ENCODE measurements at regions of chr7 and their contacts with region 1.

Region 1: GRCh38 chr7:44847508-44847920 is 373 bp downstream of the H2AZ2 start:
- DNase-seq: peak in 1 of 2 experiments; percentile 33
- H3K4me3 ChIP-seq: peak overlapping the region; percentile 64 to 93 (median 85)
- H3K27ac ChIP-seq: peak overlapping the region; percentile 86
- H3K4me1 ChIP-seq: peaks cover 0 to 3% (median 0%) of the 10 kb centered on the region in 4 experiments; a peak in 2 of 7 replicates
- H3K27me3 ChIP-seq: no peaks in the 10 kb centered on the region
- CTCF ChIP-seq: peak; percentile 68 to 75 (median 70)
- EP300 ChIP-seq: no peak
- POLR2A ChIP-seq: no peak
- RAD21 ChIP-seq: peak; percentile 64 to 69

Region 2: DNA sequence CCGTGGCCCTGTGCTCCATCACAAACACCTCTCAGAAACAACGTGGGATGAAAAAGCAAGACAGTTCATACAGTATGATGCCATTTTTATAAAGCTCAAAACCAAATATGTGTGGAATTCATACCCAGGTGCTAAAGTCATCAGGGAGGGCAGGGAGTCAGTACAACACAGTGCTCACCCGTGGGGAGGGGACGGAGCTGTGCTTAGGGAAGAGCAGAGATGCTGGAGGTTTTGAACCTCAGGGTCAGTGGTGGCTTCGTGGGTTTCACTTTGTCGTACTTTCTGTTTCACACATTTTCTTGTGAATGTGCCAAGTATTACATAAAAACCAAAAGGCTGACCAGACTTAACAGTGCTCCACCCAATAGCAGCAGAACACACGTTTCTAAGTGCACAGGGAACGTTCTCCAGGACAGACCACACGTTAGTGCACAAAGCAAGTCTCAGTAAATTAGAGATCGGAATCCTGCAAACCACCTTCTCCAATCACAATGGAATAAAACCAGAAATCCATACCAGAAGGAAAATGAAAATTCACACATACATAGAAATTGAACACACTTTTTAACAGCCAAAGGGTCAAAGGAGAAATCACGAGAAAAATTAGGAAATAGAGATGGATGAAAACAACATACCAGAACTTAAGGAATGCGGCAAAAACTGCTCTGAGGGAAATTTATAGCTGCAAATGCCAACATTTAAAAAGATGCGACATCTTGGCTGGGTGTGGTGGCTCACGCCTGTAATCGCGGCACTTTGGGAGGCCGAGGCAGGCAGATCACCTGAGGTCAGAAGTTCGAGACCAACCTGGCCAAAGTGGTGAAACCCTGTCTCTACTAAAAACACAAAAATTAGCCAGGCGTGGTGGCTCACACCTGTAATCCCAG is 77.5 kb before region 1 on chr7:
- CTCF ChIA-PET with region 1: interaction called, 7 read pairs
- POLR2A ChIA-PET with region 1: interaction called, 10 read pairs
- DNase-seq: no peak
- H3K4me3 ChIP-seq: no peak overlapping the region
- H3K27ac ChIP-seq: no peak overlapping the region
- H3K4me1 ChIP-seq: peaks cover 0 to 4% (median 0%) of the 10 kb centered on the region in 4 experiments; a peak in 1 of 7 replicates
- H3K27me3 ChIP-seq: no peaks in the 10 kb centered on the region
- CTCF ChIP-seq: no peak
- EP300 ChIP-seq: no peak
- POLR2A ChIP-seq: 0 out of 3 replicates have a peak, but pooled peaks of 1 of the 2 experiments have one; percentile 4
- RAD21 ChIP-seq: no peak

Region 3: GRCh38 chr7:44858161-44858560 is 10.6 kb after region 1 on chr7:
- CTCF ChIA-PET with region 1: interaction called, 7 read pairs
- POLR2A ChIA-PET with region 1: interaction called, 20 read pairs
- DNase-seq: no peak
- H3K4me3 ChIP-seq: no peak overlapping the region
- H3K27ac ChIP-seq: no peak overlapping the region
- H3K4me1 ChIP-seq: no peaks in the 10 kb centered on the region
- H3K27me3 ChIP-seq: no peaks in the 10 kb centered on the region
- CTCF ChIP-seq: no peak
- EP300 ChIP-seq: no peak
- POLR2A ChIP-seq: no peak
- RAD21 ChIP-seq: no peak

Region 4: DNA sequence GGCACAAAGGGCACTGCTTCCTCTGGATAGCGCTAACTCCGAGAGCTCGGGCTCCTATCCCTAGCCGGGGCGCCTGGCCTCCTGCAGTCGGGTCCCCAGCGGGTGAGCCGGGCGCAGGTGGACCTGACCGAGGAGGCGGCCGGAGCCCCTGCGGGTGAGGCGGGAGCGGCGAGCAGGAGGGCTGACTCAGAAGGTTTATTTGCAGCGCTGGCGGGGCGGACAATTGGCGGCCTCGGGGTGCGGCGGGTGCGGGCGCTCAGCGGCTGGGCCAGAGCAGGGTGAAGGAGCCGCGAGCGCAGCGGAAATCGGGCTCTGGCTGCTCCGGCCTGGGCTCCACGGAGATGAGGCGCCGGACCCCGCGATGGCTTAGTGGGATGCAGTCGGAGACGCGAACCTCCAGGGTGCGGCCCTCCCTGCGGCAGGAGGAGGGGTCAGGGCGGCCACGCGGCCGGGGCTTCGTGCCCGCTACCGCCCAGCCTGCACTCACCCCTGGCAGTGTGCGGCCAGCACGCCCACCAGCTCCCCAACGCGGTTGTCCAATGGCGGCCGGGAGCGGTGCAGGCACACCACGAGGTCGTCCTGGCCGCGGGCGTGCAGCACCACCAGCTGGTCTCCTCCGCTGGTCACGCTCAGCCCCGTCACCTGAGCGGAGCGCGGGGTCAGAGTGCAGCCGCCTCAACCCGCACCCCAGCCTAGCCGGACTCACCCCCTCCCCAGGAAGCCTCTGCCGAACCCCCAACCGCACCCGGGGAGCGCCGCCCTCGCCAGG is 115.2 kb after region 1 on chr7:
- CTCF ChIA-PET with region 1: interaction called, 4 read pairs
- POLR2A ChIA-PET with region 1: interaction called, 12 read pairs
- DNase-seq: peak in 1 of 2 experiments; percentile 67
- H3K4me3 ChIP-seq: peak overlapping the region; percentile 20 to 58 (median 38)
- H3K27ac ChIP-seq: no peak overlapping the region
- H3K4me1 ChIP-seq: peaks cover 0 to 11% (median 4%) of the 10 kb centered on the region in 4 experiments; a peak in 4 of 7 replicates
- H3K27me3 ChIP-seq: peaks cover 10 to 40% (median 23%) of the 10 kb centered on the region in 4 experiments; a peak in 6 of 7 replicates
- CTCF ChIP-seq: peak in 1 of 3 experiments; percentile 12; a peak in 1 of 4 replicates
- EP300 ChIP-seq: no peak
- POLR2A ChIP-seq: 0 out of 3 replicates have a peak, but pooled peaks of 1 of the 2 experiments have one; percentile 36
- RAD21 ChIP-seq: peak; percentile 22 to 31; a peak in 2 of 4 replicates

Region 5: GRCh38 chr7:44999245-45000095 is 152.0 kb after region 1 on chr7:
- CTCF ChIA-PET with region 1: interaction called, 3 read pairs
- POLR2A ChIA-PET with region 1: interaction called, 12 read pairs
- DNase-seq: peak; percentile 96 to 97
- H3K4me3 ChIP-seq: peak overlapping the region; percentile 66 to 98 (median 73)
- H3K27ac ChIP-seq: peak overlapping the region; percentile 97
- H3K4me1 ChIP-seq: peaks cover 0 to 6% (median 3%) of the 10 kb centered on the region in 4 experiments; a peak in 3 of 7 replicates
- H3K27me3 ChIP-seq: no peaks in the 10 kb centered on the region
- CTCF ChIP-seq: no peak
- EP300 ChIP-seq: no peak
- POLR2A ChIP-seq: peak; percentile 56 to 85
- RAD21 ChIP-seq: no peak